AG04450 (cell line): ENCODE measurements at regions of chr2 and their contacts with region 1.

Region 1: GRCh38 chr2:164061129-164061746 is 325.4 kb upstream of the FIGN start:
- DNase-seq: no peak
- H3K4me3 ChIP-seq: no peak overlapping the region
- H3K27ac ChIP-seq: no peak overlapping the region
- H3K27me3 ChIP-seq: no peaks in the 10 kb centered on the region
- CTCF ChIP-seq: peak; percentile 66

Region 2: GRCh38 chr2:163182764-163183354 is 878.4 kb before region 1 on chr2:
- CTCF ChIA-PET with region 1: interaction called, 20 read pairs
- POLR2A ChIA-PET with region 1: no interaction called
- DNase-seq: no peak
- H3K4me3 ChIP-seq: no peak overlapping the region
- H3K27ac ChIP-seq: no peak overlapping the region
- H3K27me3 ChIP-seq: no peaks in the 10 kb centered on the region
- CTCF ChIP-seq: peak; percentile 63

Region 3: DNA sequence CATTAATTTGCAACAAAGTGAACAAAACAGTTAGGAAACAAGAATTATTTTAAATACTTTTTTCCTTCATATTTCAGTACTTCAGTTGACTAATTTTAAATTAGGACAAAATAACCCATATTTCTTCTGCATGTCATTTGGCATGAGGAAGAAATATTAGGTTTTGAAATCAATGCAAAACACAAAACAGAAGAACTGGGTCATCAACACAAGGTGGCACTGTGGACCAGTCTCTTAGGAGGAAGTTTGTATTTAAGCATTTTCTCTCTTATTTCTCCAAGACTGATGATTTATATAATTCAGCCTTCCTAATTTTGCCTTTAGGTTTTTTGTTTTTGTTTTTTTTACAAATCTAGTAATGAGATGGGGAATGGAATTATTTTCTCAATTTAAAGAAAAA is 869.9 kb before region 1 on chr2:
- CTCF ChIA-PET with region 1: interaction called, 10 read pairs
- POLR2A ChIA-PET with region 1: no interaction called
- DNase-seq: no peak
- H3K4me3 ChIP-seq: no peak overlapping the region
- H3K27ac ChIP-seq: no peak overlapping the region
- H3K27me3 ChIP-seq: no peaks in the 10 kb centered on the region
- CTCF ChIP-seq: peak; percentile 73

Region 4: GRCh38 chr2:163345908-163346573 is 715.2 kb before region 1 on chr2:
- CTCF ChIA-PET with region 1: interaction called, 29 read pairs
- POLR2A ChIA-PET with region 1: no interaction called
- DNase-seq: no peak
- H3K4me3 ChIP-seq: no peak overlapping the region
- H3K27ac ChIP-seq: no peak overlapping the region
- H3K27me3 ChIP-seq: no peaks in the 10 kb centered on the region
- CTCF ChIP-seq: peak; percentile 82

Region 5: DNA sequence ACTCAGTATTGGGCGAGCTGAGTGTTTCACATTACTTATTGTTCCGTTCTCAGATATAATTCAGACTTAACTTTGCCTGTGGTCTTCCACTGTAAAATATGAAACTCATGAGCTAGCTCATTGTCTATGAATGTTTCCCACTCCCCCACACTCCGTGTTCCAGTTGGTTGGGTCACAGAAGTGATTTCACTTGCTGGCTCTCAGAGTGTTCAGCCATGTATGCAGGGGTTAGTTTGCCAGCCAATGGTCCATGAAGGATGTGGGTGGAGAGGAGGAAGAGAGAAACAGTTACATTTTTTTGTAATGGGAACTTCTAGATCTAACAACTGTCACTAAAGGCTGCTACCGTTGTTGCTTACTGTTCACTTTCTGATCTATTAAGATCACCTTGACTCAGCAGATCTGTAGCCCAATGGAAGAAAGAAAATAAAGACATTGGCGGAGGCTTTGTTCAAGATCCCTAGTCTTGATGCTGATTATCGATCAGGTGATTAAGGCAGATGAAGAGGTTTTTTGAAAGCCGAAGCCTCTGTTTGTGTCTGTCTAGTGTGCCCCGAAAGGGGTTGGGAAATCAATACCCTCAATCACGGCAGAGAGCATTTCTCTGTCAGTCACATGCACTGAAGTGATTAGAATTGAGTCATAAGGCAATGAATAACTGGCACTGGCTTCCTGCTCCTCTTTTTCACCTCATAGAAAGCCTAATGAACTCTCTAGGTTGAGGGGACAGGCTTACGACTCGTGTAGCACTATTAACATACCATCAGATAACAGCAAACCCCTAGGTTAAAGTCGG is 45.7 kb before region 1 on chr2:
- CTCF ChIA-PET with region 1: no interaction called
- POLR2A ChIA-PET with region 1: no interaction called
- DNase-seq: no peak
- H3K4me3 ChIP-seq: no peak overlapping the region
- H3K27ac ChIP-seq: no peak overlapping the region
- H3K27me3 ChIP-seq: no peaks in the 10 kb centered on the region
- CTCF ChIP-seq: no peak

Region 6: GRCh38 chr2:164287056-164287455 is 225.8 kb after region 1 on chr2:
- CTCF ChIA-PET with region 1: no interaction called
- POLR2A ChIA-PET with region 1: no interaction called
- DNase-seq: no peak
- H3K4me3 ChIP-seq: no peak overlapping the region
- H3K27ac ChIP-seq: no peak overlapping the region
- H3K27me3 ChIP-seq: no peaks in the 10 kb centered on the region
- CTCF ChIP-seq: no peak